ENCODE measurements at regions of chr4 and their contacts with region 1.

Region 1: GRCh38 chr4:140359562-140360427 is 13.7 kb upstream of the SCOC start:
- DNase-seq: peak; percentile 85
- H3K4me3 ChIP-seq: no peak overlapping the region
- H3K27ac ChIP-seq: no peak overlapping the region
- H3K4me1 ChIP-seq: no peaks in the 10 kb centered on the region
- H3K27me3 ChIP-seq: no peaks in the 10 kb centered on the region
- CTCF ChIP-seq: peak; percentile 16 to 78 (median 54)
- EP300 ChIP-seq: no peak
- POLR2A ChIP-seq: no peak

Region 2: GRCh38 chr4:140012688-140013486 is 346.9 kb before region 1 on chr4:
- intact Hi-C with region 1: loop called (anchors 10 kb)
- DNase-seq: peak; percentile 69
- H3K4me3 ChIP-seq: no peak overlapping the region
- H3K27ac ChIP-seq: no peak overlapping the region
- H3K4me1 ChIP-seq: peaks cover 0 to 9% (median 6%) of the 10 kb centered on the region in 4 donors
- H3K27me3 ChIP-seq: no peaks in the 10 kb centered on the region
- CTCF ChIP-seq: peak in 2 of 4 experiments; percentile 43 to 52
- EP300 ChIP-seq: no peak
- POLR2A ChIP-seq: no peak

Region 3: DNA sequence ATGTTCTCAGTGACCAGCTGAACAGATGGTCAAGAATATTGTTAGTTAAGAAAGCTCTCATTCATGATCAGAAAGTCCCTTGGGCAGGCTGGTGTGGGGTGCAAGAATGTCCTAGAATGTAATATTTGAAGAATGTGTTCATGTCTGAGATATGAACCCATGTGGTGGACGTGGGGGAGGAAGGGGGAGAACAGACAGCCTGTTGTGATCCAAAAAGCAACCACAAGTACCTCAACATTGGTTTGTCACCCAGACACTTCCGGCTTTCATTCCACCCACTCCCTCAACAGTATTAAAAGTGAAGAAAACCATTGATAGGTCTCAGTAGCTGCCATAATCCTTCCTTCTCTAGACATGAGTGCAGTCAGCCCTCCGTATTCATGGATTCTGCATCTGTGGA is 288.0 kb before region 1 on chr4:
- intact Hi-C with region 1: no loop called
- DNase-seq: no peak
- H3K4me3 ChIP-seq: no peak overlapping the region
- H3K27ac ChIP-seq: no peak overlapping the region
- H3K4me1 ChIP-seq: peaks cover 0 to 16% (median 12%) of the 10 kb centered on the region in 4 donors
- H3K27me3 ChIP-seq: no peaks in the 10 kb centered on the region
- CTCF ChIP-seq: no peak
- EP300 ChIP-seq: no peak
- POLR2A ChIP-seq: no peak

Region 4: DNA sequence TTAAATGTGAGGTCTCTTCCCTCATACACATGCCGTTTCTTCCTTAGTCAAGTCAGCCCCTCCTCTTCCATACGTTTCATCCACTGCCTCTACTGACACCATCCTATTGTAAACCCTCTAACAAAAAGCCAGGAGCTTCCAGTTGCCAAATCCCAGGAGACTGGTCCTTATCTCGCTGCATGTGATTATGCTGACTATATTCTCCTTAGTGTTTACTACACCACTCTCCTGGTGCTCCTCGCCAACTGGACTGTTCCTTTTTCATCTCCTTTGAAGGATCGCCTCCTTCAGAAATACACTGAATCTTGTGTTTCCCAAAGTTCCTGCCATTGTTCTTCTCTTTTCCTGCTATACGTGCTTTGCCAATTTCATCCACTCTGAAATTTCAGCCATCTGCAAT is 233.5 kb before region 1 on chr4:
- intact Hi-C with region 1: no loop called
- DNase-seq: no peak
- H3K4me3 ChIP-seq: no peak overlapping the region
- H3K27ac ChIP-seq: no peak overlapping the region
- H3K4me1 ChIP-seq: no peaks in the 10 kb centered on the region
- H3K27me3 ChIP-seq: no peaks in the 10 kb centered on the region
- CTCF ChIP-seq: no peak
- EP300 ChIP-seq: no peak
- POLR2A ChIP-seq: no peak

Region 5: DNA sequence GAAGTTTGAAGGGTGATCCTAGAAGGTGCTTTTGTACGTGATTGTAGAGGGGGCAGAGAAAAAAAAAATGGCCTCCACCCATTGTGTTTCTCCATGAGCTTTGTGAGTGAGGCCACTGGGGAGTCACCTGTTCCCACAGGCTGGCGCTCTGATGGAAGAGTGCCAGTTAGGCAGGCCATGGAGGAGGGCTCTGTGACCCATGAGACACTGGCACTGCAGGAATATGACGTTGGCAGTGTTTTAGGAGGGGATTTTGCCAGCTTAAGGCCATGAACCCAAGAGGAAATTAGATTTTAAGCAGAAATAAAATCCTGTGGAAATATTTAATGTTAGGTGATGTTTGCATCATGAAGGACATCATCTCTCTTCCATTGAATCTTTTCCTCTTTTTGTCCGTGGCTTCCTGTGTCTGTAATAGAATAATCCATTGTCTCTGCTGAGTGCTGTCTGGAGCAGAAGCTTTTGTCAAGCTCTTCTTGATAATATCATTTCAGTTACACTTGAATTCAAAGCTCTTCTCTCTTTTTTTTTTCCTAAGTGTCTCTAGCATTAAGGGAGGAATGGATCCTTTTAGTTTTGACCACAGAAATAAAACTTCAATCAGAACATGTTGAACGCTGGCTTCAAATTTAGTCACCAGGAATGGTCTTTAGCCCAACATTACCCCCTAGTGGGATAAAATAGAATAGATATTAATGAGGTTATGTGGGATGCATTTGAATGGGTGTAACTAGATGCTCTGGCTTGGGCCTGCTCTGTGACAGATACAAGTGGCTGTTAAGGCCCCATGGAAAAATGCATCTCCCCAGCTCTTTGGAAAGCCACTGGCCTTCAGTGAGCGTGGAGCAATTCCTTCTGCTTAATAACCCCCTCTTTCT is 250.0 kb after region 1 on chr4:
- intact Hi-C with region 1: loop called (anchors 10 kb)
- DNase-seq: no peak
- H3K4me3 ChIP-seq: no peak overlapping the region
- H3K27ac ChIP-seq: no peak overlapping the region
- H3K4me1 ChIP-seq: no peaks in the 10 kb centered on the region
- H3K27me3 ChIP-seq: no peaks in the 10 kb centered on the region
- CTCF ChIP-seq: peak in 3 of 4 experiments; percentile 9 to 46 (median 17)
- EP300 ChIP-seq: no peak
- POLR2A ChIP-seq: no peak

Region 6: DNA sequence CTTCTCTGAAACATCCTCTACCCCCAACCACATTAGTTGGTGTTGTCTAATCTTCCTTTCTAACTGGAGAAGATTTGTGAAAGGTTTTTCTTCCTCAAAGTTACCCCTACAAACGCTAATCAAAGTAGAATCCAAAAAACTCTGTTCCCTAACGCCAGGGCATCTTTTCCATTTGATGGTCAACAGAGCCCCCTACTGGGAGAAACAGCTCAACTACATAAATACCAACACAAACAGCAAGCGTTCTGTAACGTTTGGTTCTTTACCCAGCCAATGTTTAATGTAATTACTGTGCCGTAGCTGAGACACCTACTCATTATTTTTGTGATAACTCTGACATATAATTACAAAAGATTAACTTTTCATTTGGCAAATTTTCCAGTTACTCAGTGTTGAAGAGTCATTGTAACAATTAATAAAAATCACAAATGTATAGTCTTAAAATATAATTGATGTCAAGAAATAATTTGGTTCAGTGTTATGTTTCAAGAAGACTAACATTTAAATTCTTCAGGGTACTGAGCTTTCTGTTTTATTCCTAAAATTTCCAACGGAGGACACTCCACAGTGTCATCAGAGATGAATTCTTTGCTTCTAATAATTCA is 491.3 kb after region 1 on chr4:
- intact Hi-C with region 1: loop called (anchors 5 kb)
- DNase-seq: no peak
- H3K4me3 ChIP-seq: no peak overlapping the region
- H3K27ac ChIP-seq: no peak overlapping the region
- H3K4me1 ChIP-seq: peaks cover 0 to 3% (median 1%) of the 10 kb centered on the region in 4 donors
- H3K27me3 ChIP-seq: no peaks in the 10 kb centered on the region
- CTCF ChIP-seq: peak; percentile 62 to 86 (median 74)
- EP300 ChIP-seq: no peak
- POLR2A ChIP-seq: no peak